Posterior cingulate gyrus (tissue), 11 donors: ENCODE measurements at regions of chr6 and their contacts with region 1.

Region 1: GRCh38 chr6:128731249-128732165 is 151.4 kb upstream of the LAMA2 start:
- DNase-seq: no peak

Region 2: GRCh38 chr6:127737009-127737486 is 994.5 kb before region 1 on chr6:
- intact Hi-C with region 1: loop called (anchors 2 kb)
- DNase-seq: peak in 2 of 10 donors; percentile 6 to 24

Region 3: DNA sequence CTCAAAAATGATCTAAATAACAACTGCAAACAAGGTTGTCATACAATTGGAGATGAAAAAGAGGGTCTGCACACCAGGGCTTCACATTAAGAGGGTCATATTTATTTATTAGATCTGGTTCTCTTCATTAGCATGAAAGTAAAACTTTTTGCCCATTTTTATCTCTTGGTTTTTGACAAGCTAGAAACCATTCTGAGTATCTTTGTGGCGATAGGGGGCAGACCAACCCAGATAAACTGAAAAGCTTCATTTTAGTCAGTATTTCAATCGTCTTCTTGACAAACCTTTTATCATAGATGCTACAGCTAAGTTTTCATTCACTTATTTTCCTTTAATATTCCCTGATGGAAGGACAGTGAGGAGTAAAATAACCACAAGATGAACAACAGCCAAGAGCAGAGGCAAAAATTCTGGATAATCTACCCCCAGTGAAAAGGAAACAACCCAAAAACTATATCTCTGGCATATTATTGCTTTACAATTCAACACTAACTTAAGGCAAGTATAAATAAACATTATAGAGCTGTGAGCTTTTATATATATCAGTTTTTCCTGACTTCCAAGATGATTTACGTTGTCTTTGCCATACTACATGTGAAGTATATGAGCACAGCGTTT is 875.9 kb before region 1 on chr6:
- intact Hi-C with region 1: loop called (anchors 10 kb)
- DNase-seq: peak in 5 of 10 donors; percentile 8 to 63 (median 38)

Region 4: GRCh38 chr6:129251669-129252376 is 520.3 kb after region 1 on chr6:
- intact Hi-C with region 1: loop called (anchors 10 kb)
- DNase-seq: peak in 5 of 10 donors; percentile 31 to 68 (median 50)